ENCODE measurements at regions of chr3 and their contacts with region 1.

Region 1: GRCh38 chr3:153161138-153161713 is 800 bp upstream of the RAP2B start:
- DNase-seq: peak; percentile 96 to 98 (median 97)
- H3K4me3 ChIP-seq: peak overlapping the region; percentile 73 to 87 (median 86)
- H3K4me3 Mint-ChIP-seq: peak overlapping the region; percentile 97 to 99
- H3K27ac ChIP-seq: peak overlapping the region; percentile 99 to 100
- H3K27ac Mint-ChIP-seq: peak overlapping the region; percentile 99 to 100 (median 100)
- H3K4me1 ChIP-seq: peaks cover 34 to 44% of the 10 kb centered on the region in 2 donors
- H3K4me1 Mint-ChIP-seq: peaks cover 31% of the 10 kb centered on the region
- H3K27me3 ChIP-seq: no peaks in the 10 kb centered on the region
- H3K27me3 Mint-ChIP-seq: no peaks in the 10 kb centered on the region
- CTCF ChIP-seq: no peak

Region 2: DNA sequence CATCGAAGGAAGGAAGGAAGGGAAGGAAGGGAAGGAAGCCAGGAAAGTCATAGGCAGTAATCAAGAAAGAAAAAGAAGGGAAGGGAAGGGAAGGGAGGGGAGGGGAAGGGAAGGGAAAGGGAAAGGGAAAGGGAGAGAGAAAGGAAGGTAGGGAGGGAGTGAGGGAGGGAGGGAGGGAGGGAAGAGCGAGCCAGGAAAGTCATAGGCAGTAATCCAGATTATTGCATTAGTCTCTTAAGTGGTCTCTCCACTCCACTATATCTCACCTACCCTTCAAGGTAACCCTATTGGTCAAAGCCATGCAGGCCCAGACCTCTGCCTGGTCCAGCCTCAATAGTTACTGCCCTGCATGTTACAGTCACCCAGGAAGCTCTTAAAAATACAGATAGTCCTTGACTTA is 105.4 kb before region 1 on chr3:
- intact Hi-C with region 1: loop called in 1 of 2 experiments (anchors 5 kb)
- DNase-seq: no peak
- H3K4me3 ChIP-seq: no peak overlapping the region
- H3K4me3 Mint-ChIP-seq: no peak overlapping the region
- H3K27ac ChIP-seq: no peak overlapping the region
- H3K27ac Mint-ChIP-seq: peak overlapping the region in 1 of 7 donors; percentile 72
- H3K4me1 ChIP-seq: peaks cover 10 to 32% of the 10 kb centered on the region in 2 donors
- H3K4me1 Mint-ChIP-seq: peaks cover 35% of the 10 kb centered on the region
- H3K27me3 ChIP-seq: no peaks in the 10 kb centered on the region
- H3K27me3 Mint-ChIP-seq: peaks cover 0 to 2% (median 1%) of the 10 kb centered on the region in 3 donors
- CTCF ChIP-seq: no peak

Region 3: DNA sequence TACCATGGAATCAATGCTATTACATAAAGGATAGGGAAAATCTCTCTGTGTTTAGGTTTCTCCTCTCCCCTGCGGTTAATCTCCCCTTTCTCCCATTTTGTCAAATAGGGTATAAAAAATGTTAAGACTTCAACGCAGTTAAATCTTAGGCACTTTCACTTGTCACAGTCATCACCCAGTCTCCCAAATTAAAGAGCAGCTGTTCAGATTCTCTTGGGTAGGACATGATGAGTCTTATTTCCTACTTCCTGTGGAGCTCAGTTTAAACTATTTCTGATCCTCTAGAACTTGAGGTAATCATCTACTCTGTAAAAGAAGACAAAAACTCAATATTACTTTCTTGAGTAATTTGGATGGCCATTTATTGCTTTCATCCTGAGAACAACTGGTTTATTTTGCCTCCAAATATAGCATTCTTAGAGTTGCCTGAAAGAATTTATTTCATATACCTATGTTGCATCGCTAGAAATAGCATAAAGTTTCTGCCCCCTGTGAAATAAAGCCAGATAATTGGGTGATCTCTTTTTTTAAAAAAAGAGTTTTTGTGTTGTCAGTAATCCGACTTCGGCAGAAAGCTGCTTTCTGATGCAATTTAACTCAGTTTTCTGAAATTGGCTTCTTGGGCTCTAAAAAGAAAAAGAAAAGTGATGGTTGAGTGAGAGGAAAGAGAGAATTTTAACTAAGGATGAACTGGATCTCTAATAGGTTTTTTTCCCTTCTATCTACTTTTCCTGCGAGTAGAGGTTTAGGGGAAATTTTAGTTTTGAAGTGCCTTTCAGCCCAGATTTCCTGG is 21.5 kb after region 1 on chr3:
- intact Hi-C with region 1: no loop called
- DNase-seq: peak in 1 of 3 donors; percentile 8
- H3K4me3 ChIP-seq: no peak overlapping the region
- H3K4me3 Mint-ChIP-seq: no peak overlapping the region
- H3K27ac ChIP-seq: no peak overlapping the region
- H3K27ac Mint-ChIP-seq: no peak overlapping the region
- H3K4me1 ChIP-seq: peaks cover 11 to 22% of the 10 kb centered on the region in 2 donors
- H3K4me1 Mint-ChIP-seq: peaks cover 25% of the 10 kb centered on the region
- H3K27me3 ChIP-seq: no peaks in the 10 kb centered on the region
- H3K27me3 Mint-ChIP-seq: peaks cover 0 to 1% (median 0%) of the 10 kb centered on the region in 3 donors
- CTCF ChIP-seq: no peak

Region 4: DNA sequence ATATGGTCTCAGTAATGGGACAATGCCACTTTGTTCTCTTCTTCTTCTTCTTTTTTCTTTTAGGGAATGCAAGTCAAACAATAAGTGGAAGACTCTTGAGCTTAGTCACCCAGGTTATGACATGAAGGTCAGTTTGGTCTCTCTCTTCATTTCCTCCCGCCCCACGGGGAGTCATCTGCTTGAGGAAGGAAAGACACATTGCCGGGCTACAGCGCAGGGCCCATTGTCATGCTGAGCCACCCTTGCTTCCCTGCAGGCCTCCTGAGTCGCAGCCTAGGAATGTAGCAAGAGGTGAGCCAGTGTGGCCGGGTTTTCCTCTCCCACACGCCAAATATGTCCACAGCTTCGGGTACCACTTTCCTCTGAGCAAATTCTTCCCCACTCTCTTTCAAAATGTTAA is 48.4 kb after region 1 on chr3:
- intact Hi-C with region 1: loop called in 1 of 2 experiments (anchors 5 kb)
- DNase-seq: peak; percentile 92 to 98 (median 94)
- H3K4me3 ChIP-seq: peak overlapping the region in 1 of 3 experiments; percentile 43
- H3K4me3 Mint-ChIP-seq: peak overlapping the region; percentile 54 to 64
- H3K27ac ChIP-seq: peak overlapping the region; percentile 65 to 92
- H3K27ac Mint-ChIP-seq: peak overlapping the region; percentile 92 to 99 (median 96)
- H3K4me1 ChIP-seq: peaks cover 38 to 43% of the 10 kb centered on the region in 2 donors
- H3K4me1 Mint-ChIP-seq: peaks cover 45% of the 10 kb centered on the region
- H3K27me3 ChIP-seq: no peaks in the 10 kb centered on the region
- H3K27me3 Mint-ChIP-seq: no peaks in the 10 kb centered on the region
- CTCF ChIP-seq: no peak

Region 5: DNA sequence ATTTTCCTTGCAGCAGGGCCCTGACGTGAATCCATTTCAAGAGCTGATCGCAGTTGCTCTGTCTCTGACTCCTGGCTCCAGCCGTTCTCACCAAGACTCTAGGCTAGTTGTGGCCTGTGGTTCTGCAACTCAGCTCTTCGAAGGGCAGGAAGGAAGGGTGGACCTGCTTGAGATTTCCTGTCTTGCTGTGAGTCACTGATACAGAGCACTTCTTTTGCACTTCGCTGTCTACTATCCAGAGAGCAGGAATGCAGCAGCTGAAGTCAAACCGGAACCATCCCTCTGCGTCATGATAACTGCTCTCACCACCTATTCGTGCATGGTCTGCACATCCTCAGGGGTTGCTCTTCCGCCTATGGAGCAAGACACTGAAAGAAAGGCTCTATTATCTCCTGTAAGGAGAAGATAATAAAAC is 60.5 kb after region 1 on chr3:
- intact Hi-C with region 1: loop called in 1 of 2 experiments (anchors 5 kb)
- DNase-seq: peak; percentile 98 to 100 (median 99)
- H3K4me3 ChIP-seq: peak overlapping the region in 2 of 3 experiments; percentile 20 to 53
- H3K4me3 Mint-ChIP-seq: peak overlapping the region; percentile 41 to 70
- H3K27ac ChIP-seq: peak overlapping the region; percentile 87 to 96
- H3K27ac Mint-ChIP-seq: peak overlapping the region; percentile 97 to 99 (median 98)
- H3K4me1 ChIP-seq: peaks cover 48 to 51% of the 10 kb centered on the region in 2 donors
- H3K4me1 Mint-ChIP-seq: peaks cover 50% of the 10 kb centered on the region
- H3K27me3 ChIP-seq: no peaks in the 10 kb centered on the region
- H3K27me3 Mint-ChIP-seq: peaks cover 0 to 2% (median 2%) of the 10 kb centered on the region in 3 donors
- CTCF ChIP-seq: no peak

Region 6: GRCh38 chr3:153284282-153284938 is 123.2 kb after region 1 on chr3:
- intact Hi-C with region 1: loop called (anchors 2 to 5 kb)
- DNase-seq: peak; percentile 84 to 94 (median 91)
- H3K4me3 ChIP-seq: no peak overlapping the region
- H3K4me3 Mint-ChIP-seq: peak overlapping the region in 1 of 2 donors; percentile 5
- H3K27ac ChIP-seq: peak overlapping the region; percentile 70 to 90
- H3K27ac Mint-ChIP-seq: peak overlapping the region; percentile 89 to 97 (median 95)
- H3K4me1 ChIP-seq: peaks cover 35 to 45% of the 10 kb centered on the region in 2 donors
- H3K4me1 Mint-ChIP-seq: peaks cover 43% of the 10 kb centered on the region
- H3K27me3 ChIP-seq: no peaks in the 10 kb centered on the region
- H3K27me3 Mint-ChIP-seq: peaks cover 0 to 6% (median 0%) of the 10 kb centered on the region in 3 donors
- CTCF ChIP-seq: no peak

Region 7: DNA sequence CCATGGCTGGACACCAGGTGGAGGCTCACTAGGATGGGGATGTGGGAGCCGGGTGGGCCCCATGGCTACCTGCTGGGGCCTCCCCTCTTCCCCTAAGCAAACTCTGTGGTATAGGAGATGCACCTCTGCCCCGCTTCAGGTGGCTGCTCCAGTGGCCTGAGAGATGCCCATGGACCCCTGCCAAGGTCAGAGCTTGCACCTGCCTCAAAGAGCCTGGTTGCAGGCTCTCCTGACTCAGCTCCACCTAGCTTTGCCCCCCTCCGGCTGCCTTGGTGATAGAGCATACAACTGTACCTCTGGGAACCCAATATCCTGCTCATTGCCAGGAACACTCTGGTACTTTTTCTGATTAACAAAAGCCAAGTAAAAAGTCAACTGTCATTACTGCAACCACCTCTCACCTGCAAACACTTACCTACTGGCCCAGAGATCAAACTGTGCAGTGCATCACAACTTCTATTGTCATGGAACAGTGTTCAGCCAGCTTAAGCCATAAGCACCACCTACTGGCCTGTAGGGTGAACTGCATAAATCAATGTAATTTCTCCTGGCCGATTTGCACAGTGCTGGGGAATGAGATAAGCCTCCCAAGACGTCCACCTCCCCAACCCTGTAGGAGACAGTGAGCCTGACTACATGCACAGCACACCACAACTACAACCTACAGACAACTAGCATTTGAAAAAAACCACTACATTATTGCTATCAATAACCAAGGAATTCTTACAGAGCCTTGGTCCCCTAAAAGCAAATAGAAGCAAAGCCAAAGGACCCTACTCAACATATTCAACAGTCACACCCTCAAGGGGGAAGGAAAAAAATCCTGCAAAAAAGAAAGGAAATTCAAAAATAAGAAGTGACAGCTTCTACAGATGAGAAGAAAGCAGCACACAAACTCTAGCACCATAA is 607.6 kb after region 1 on chr3:
- intact Hi-C with region 1: loop called in 1 of 2 experiments (anchors 10 kb)
- DNase-seq: peak; percentile 30 to 55 (median 53)
- H3K4me3 ChIP-seq: no peak overlapping the region
- H3K4me3 Mint-ChIP-seq: no peak overlapping the region
- H3K27ac ChIP-seq: no peak overlapping the region
- H3K27ac Mint-ChIP-seq: no peak overlapping the region
- H3K4me1 ChIP-seq: no peaks in the 10 kb centered on the region
- H3K4me1 Mint-ChIP-seq: no peaks in the 10 kb centered on the region
- H3K27me3 ChIP-seq: no peaks in the 10 kb centered on the region
- H3K27me3 Mint-ChIP-seq: peaks cover 3 to 6% (median 4%) of the 10 kb centered on the region in 3 donors
- CTCF ChIP-seq: peak; percentile 81

Measured in CD14-positive monocyte (primary cell).